Right ventricle myocardium inferior (tissue), 1 donor: ENCODE measurements at regions of chr14 and their contacts with region 1.

Region 1: GRCh38 chr14:24232121-24232644 is at the start of gene NEDD8:
- DNase-seq: peak; percentile 96
- ATAC-seq: peak; percentile 91
- total RNA-seq, gene NEDD8: 218 TPM

Region 2: GRCh38 chr14:24215495-24216344 is 16.5 kb before region 1 on chr14 and contains the start of gene MDP1:
- intact Hi-C with region 1: loop called (anchors 2 kb)
- DNase-seq: peak; percentile 94
- ATAC-seq: peak; percentile 82
- total RNA-seq, gene MDP1: 17.0 TPM